ENCODE measurements at regions of chr20 and their contacts with region 1.

Region 1: GRCh38 chr20:49982346-49983122 is at the start of gene SNAI1:
- DNase-seq: peak; percentile 72 to 77
- H3K4me3 ChIP-seq: peak within 1 kb of the TSS; percentile 35 to 37
- H3K27ac ChIP-seq: peak within 1 kb of the TSS; percentile 49 to 74
- H3K4me1 ChIP-seq: peaks cover 0 to 15% of the 10 kb centered on the region in 2 donors
- H3K27me3 ChIP-seq: no peaks in the 10 kb centered on the region
- CTCF ChIP-seq: peak in 3 of 4 experiments; percentile 52 to 75 (median 65)
- POLR2A ChIP-seq: peak; percentile 18 to 71
- total RNA-seq, gene SNAI1: 1.0 to 15.4 (median 4.5) TPM

Region 2: GRCh38 chr20:50070991-50071888 is 88.7 kb after region 1 on chr20:
- intact Hi-C with region 1: loop called (anchors 5 kb)
- DNase-seq: peak; percentile 83 to 93
- H3K4me3 ChIP-seq: peak overlapping the region; percentile 18 to 22
- H3K27ac ChIP-seq: no peak overlapping the region
- H3K4me1 ChIP-seq: peaks cover 0 to 8% of the 10 kb centered on the region in 2 donors
- H3K27me3 ChIP-seq: no peaks in the 10 kb centered on the region
- CTCF ChIP-seq: peak; percentile 99 to 100 (median 100)
- POLR2A ChIP-seq: peak in 1 of 2 donors; percentile 28

Region 3: GRCh38 chr20:50172347-50173013 is 189.9 kb after region 1 on chr20:
- intact Hi-C with region 1: loop called (anchors 10 kb)
- DNase-seq: peak; percentile 81 to 83
- H3K4me3 ChIP-seq: peak overlapping the region; percentile 49 to 51
- H3K27ac ChIP-seq: peak overlapping the region; percentile 79 to 85
- H3K4me1 ChIP-seq: peaks cover 0 to 10% of the 10 kb centered on the region in 2 donors
- H3K27me3 ChIP-seq: no peaks in the 10 kb centered on the region
- CTCF ChIP-seq: peak in 1 of 4 experiments; percentile 17
- POLR2A ChIP-seq: peak; percentile 53 to 63

Measured in uterus (tissue), 4 donors.